ENCODE measurements at regions of chr2 and their contacts with region 1.

Region 1: GRCh38 chr2:19955544-19956422 is 34.1 kb downstream of the WDR35 start:
- DNase-seq: peak; percentile 65
- ATAC-seq: peak; percentile 100
- H3K4me3 ChIP-seq: no peak overlapping the region
- H3K27ac ChIP-seq: no peak overlapping the region
- H3K4me1 ChIP-seq: no peaks in the 10 kb centered on the region
- H3K27me3 ChIP-seq: no peaks in the 10 kb centered on the region
- CTCF ChIP-seq: peak; percentile 77 to 99 (median 82)
- POLR2A ChIP-seq: no peak
- RAD21 ChIP-seq: peak; percentile 97

Region 2: GRCh38 chr2:19944205-19944845 is 11.5 kb before region 1 on chr2:
- CTCF ChIA-PET with region 1: interaction called, 17 read pairs
- POLR2A ChIA-PET with region 1: no interaction called
- RAD21 ChIA-PET with region 1: no interaction called
- intact Hi-C with region 1: no loop called
- DNase-seq: no peak
- ATAC-seq: no peak
- H3K4me3 ChIP-seq: no peak overlapping the region
- H3K27ac ChIP-seq: no peak overlapping the region
- H3K4me1 ChIP-seq: no peaks in the 10 kb centered on the region
- H3K27me3 ChIP-seq: no peaks in the 10 kb centered on the region
- CTCF ChIP-seq: no peak
- POLR2A ChIP-seq: no peak
- RAD21 ChIP-seq: no peak

Measured in HCT116 (cell line).